Esophagus muscularis mucosa (tissue), 4 donors: ENCODE measurements at regions of chr12 and their contacts with region 1.

Region 1: DNA sequence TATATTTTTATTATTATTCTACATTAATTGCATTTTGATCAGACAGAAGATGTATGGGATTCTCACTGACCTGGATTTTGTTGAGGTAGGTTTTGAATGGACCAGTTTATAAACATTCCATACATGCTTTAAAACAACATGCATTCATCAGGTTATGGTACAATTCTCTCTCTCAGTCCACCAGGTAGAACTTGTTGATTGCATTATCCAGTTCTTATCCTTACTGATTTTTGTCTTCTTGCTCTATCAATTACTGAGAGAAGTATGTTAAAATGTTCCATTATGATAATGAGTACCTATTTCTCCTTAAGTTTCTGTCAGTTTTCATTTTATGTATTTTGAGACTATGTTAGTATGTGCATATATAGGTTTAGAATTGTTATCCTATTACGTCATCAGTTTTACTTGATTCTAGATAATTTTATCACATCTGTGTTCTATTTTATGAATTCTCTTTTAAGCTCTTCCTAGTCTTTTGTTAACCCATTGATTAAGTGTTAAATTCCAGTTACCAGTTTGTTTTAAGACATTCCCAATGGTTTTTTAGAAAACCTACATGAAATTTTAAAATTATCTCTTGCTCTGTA is 50.6 kb downstream of the EP400 start:
- DNase-seq: no peak
- H3K4me3 ChIP-seq: no peak overlapping the region
- H3K27ac ChIP-seq: no peak overlapping the region
- H3K4me1 ChIP-seq: peaks cover 0 to 5% (median 0%) of the 10 kb centered on the region in 4 donors
- H3K27me3 ChIP-seq: no peaks in the 10 kb centered on the region
- CTCF ChIP-seq: no peak
- EP300 ChIP-seq: no peak
- POLR2A ChIP-seq: no peak

Region 2: DNA sequence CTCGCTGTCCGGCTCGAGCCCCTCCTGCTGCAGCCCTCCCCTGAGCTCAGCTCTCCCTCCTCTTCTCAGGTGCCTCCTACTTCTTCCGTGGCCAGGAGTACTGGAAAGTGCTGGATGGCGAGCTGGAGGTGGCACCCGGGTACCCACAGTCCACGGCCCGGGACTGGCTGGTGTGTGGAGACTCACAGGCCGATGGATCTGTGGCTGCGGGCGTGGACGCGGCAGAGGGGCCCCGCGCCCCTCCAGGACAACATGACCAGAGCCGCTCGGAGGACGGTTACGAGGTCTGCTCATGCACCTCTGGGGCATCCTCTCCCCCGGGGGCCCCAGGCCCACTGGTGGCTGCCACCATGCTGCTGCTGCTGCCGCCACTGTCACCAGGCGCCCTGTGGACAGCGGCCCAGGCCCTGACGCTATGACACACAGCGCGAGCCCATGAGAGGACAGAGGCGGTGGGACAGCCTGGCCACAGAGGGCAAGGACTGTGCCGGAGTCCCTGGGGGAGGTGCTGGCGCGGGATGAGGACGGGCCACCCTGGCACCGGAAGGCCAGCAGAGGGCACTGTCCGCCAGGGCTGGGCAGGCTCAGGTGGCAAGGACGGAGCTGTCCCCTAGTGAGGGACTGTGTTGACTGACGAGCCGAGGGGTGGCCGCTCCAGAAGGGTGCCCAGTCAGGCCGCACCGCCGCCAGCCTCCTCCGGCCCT is 149.4 kb before region 1 on chr12:
- intact Hi-C with region 1: loop called (anchors 2 kb)
- DNase-seq: no peak
- H3K4me3 ChIP-seq: peak overlapping the region in 1 of 4 donors; percentile 9
- H3K27ac ChIP-seq: no peak overlapping the region
- H3K4me1 ChIP-seq: peaks cover 0 to 10% (median 0%) of the 10 kb centered on the region in 4 donors
- H3K27me3 ChIP-seq: peaks cover 0 to 59% (median 0%) of the 10 kb centered on the region in 4 donors
- CTCF ChIP-seq: peak; percentile 76 to 87 (median 81)
- EP300 ChIP-seq: no peak
- POLR2A ChIP-seq: no peak